Calu3 (cell line): ENCODE measurements at regions of chr2 and their contacts with region 1.

Region 1: GRCh38 chr2:148201075-148202004 is 180.4 kb downstream of the MBD5 start:
- DNase-seq: peak; percentile 61
- H3K4me3 Mint-ChIP-seq: no peak overlapping the region
- H3K27ac Mint-ChIP-seq: no peak overlapping the region
- H3K4me1 Mint-ChIP-seq: peaks cover 7% of the 10 kb centered on the region
- H3K27me3 Mint-ChIP-seq: no peaks in the 10 kb centered on the region
- CTCF ChIP-seq: peak; percentile 52

Region 2: DNA sequence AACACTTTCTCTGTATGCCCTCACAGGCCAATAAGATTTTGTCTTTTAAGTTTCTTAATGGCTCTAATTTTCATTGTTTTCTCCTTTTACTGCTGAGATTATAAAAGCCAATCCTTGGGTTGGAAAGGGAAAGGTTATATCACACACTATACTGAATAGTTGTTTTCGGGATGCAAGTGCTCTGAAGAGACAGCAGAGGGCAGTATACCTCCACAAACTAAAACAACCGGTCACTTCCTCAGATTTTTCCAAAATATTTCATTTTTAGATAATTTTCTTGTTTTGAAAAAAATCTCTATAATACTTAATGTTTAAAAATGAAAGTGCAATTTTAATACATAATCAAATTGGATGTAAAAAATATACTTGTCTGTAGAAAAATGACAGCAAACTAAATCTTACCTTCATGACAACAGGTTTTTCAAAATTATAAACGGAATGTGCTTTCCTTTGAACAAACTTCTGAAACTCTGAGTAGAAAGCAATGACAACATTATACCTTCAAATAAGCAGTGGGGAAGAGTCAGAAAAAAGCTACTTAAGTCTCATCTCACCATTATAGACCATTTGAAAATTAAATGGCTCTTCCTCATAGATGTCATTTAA is 263.5 kb before region 1 on chr2:
- CTCF ChIA-PET with region 1: no interaction called
- intact Hi-C with region 1: loop called (anchors 5 kb)
- DNase-seq: no peak
- H3K4me3 Mint-ChIP-seq: no peak overlapping the region
- H3K27ac Mint-ChIP-seq: no peak overlapping the region
- H3K4me1 Mint-ChIP-seq: no peaks in the 10 kb centered on the region
- H3K27me3 Mint-ChIP-seq: no peaks in the 10 kb centered on the region
- CTCF ChIP-seq: peak; percentile 80

Region 3: GRCh38 chr2:147989809-147990403 is 211.4 kb before region 1 on chr2:
- CTCF ChIA-PET with region 1: no interaction called
- intact Hi-C with region 1: loop called (anchors 5 kb)
- DNase-seq: peak; percentile 13
- H3K4me3 Mint-ChIP-seq: no peak overlapping the region
- H3K27ac Mint-ChIP-seq: no peak overlapping the region
- H3K4me1 Mint-ChIP-seq: peaks cover 6% of the 10 kb centered on the region
- H3K27me3 Mint-ChIP-seq: no peaks in the 10 kb centered on the region
- CTCF ChIP-seq: peak; percentile 11

Region 4: GRCh38 chr2:149050188-149050587 is 848.8 kb after region 1 on chr2:
- CTCF ChIA-PET with region 1: no interaction called
- intact Hi-C with region 1: no loop called
- DNase-seq: no peak
- H3K4me3 Mint-ChIP-seq: no peak overlapping the region
- H3K27ac Mint-ChIP-seq: no peak overlapping the region
- H3K4me1 Mint-ChIP-seq: no peaks in the 10 kb centered on the region
- H3K27me3 Mint-ChIP-seq: peaks cover 17% of the 10 kb centered on the region
- CTCF ChIP-seq: no peak